ENCODE measurements at regions of chr3 and their contacts with region 1.

Region 1: GRCh38 chr3:42780892-42781700 is 8.0 kb upstream of the CCDC13 start:
- DNase-seq: peak; percentile 92
- ATAC-seq: peak; percentile 48
- H3K4me3 ChIP-seq: no peak overlapping the region
- H3K27ac ChIP-seq: peak overlapping the region; percentile 85
- H3K4me1 ChIP-seq: peaks cover 40% of the 10 kb centered on the region
- H3K27me3 ChIP-seq: no peaks in the 10 kb centered on the region
- CTCF ChIP-seq: peak; percentile 93

Region 2: DNA sequence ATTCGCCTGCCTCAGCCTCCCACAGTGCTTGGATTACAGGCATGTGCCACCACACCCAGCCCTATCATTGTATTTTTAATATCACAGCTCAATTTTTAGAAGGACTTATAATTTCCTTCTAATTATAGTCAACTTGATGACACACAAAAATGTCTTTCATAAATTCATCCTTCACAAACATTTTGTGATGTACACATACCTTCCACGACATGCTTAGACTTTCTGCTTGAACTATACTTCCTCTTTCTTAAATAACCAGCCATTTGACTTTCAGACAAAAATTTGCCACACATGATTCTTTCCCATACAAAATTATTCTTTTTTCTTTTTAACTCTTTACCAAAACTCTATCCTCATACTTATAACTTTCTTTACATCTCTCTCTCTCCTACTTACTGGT is 466.7 kb before region 1 on chr3:
- CTCF ChIA-PET with region 1: no interaction called
- POLR2A ChIA-PET with region 1: no interaction called
- intact Hi-C with region 1: no loop called
- DNase-seq: no peak
- ATAC-seq: no peak
- H3K4me3 ChIP-seq: no peak overlapping the region
- H3K27ac ChIP-seq: no peak overlapping the region
- H3K4me1 ChIP-seq: no peaks in the 10 kb centered on the region
- H3K27me3 ChIP-seq: no peaks in the 10 kb centered on the region
- CTCF ChIP-seq: no peak

Region 3: GRCh38 chr3:42804106-42804830 is 23.2 kb after region 1 on chr3 and contains the start of gene HIGD1A:
- CTCF ChIA-PET with region 1: interaction called, 3 read pairs
- POLR2A ChIA-PET with region 1: interaction called, 3 read pairs
- intact Hi-C with region 1: loop called (anchors 1 kb)
- DNase-seq: peak; percentile 98
- ATAC-seq: peak; percentile 96
- H3K4me3 ChIP-seq: peak within 1 kb of the TSS; percentile 97
- H3K27ac ChIP-seq: peak within 1 kb of the TSS; percentile 89
- H3K4me1 ChIP-seq: peaks cover 34% of the 10 kb centered on the region
- H3K27me3 ChIP-seq: no peaks in the 10 kb centered on the region
- CTCF ChIP-seq: no peak
- total RNA-seq, gene HIGD1A: 118 and 154 TPM in 2 replicates

Region 4: GRCh38 chr3:42819351-42819965 is 38.4 kb after region 1 on chr3:
- CTCF ChIA-PET with region 1: interaction called, 3 read pairs
- POLR2A ChIA-PET with region 1: interaction called, 15 read pairs
- intact Hi-C with region 1: loop called (anchors 2 kb)
- DNase-seq: peak; percentile 59
- ATAC-seq: peak; percentile 21
- H3K4me3 ChIP-seq: peak overlapping the region; percentile 32
- H3K27ac ChIP-seq: peak overlapping the region; percentile 99
- H3K4me1 ChIP-seq: peaks cover 59% of the 10 kb centered on the region
- H3K27me3 ChIP-seq: no peaks in the 10 kb centered on the region
- CTCF ChIP-seq: no peak; the same call in 1 of the 2 replicates

Region 5: GRCh38 chr3:42839616-42840015 is 58.5 kb after region 1 on chr3:
- CTCF ChIA-PET with region 1: interaction called, 22 read pairs
- POLR2A ChIA-PET with region 1: no interaction called
- intact Hi-C with region 1: loop called (anchors 1 kb)
- DNase-seq: peak; percentile 87
- ATAC-seq: peak; percentile 99
- H3K4me3 ChIP-seq: peak overlapping the region; percentile 57
- H3K27ac ChIP-seq: no peak overlapping the region
- H3K4me1 ChIP-seq: peaks cover 6% of the 10 kb centered on the region; the same call in 1 of the 2 replicates
- H3K27me3 ChIP-seq: no peaks in the 10 kb centered on the region
- CTCF ChIP-seq: peak; percentile 75

Region 6: GRCh38 chr3:42880601-42881451 is 99.7 kb after region 1 on chr3:
- CTCF ChIA-PET with region 1: no interaction called
- POLR2A ChIA-PET with region 1: no interaction called
- intact Hi-C with region 1: loop called (anchors 1 kb)
- DNase-seq: peak; percentile 88
- ATAC-seq: peak; percentile 97
- H3K4me3 ChIP-seq: peak overlapping the region; percentile 68
- H3K27ac ChIP-seq: no peak overlapping the region
- H3K4me1 ChIP-seq: peaks cover 20% of the 10 kb centered on the region
- H3K27me3 ChIP-seq: no peaks in the 10 kb centered on the region
- CTCF ChIP-seq: peak; percentile 88

Region 7: DNA sequence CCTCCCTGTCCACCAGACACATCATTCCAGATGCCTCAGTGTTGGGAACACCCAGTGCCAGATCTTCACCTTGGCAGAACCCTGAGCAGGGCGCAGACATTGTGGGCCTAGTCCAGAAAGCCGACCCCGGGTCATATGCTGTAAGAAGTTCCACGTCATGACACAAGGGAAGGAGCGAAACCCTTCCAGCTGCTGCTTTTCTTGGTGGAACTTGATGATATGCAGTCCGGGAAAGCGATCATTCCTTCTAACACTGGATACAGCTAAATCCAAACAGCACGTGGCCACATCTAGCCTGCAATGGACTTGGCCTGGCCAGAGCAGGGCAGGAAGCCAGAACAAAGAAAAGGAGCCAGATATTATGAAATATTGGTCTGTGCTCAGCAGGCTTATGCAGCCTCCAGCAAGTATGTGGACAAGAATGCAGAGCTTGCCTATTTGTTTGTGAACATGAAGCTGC is 220.0 kb after region 1 on chr3:
- CTCF ChIA-PET with region 1: no interaction called
- POLR2A ChIA-PET with region 1: no interaction called
- intact Hi-C with region 1: no loop called
- DNase-seq: peak; percentile 11
- ATAC-seq: peak; percentile 29; the same call in 1 of the 2 replicates
- H3K4me3 ChIP-seq: no peak overlapping the region
- H3K27ac ChIP-seq: no peak overlapping the region
- H3K4me1 ChIP-seq: peaks cover 19% of the 10 kb centered on the region
- H3K27me3 ChIP-seq: no peaks in the 10 kb centered on the region
- CTCF ChIP-seq: no peak

Measured in PC-3 (cell line).